Activated T-helper 2 cell treated with anti-CD3 and anti-CD28 coated beads, Interferon-gamma antibody, Interleukin-2, Interleukin-4, amounts not matched to agents 10 μg/mL and 5 μg/mL and 100 μg/mL, durations not matched to agents 14 hours and 24 hours and 36 hours (primary cell): ENCODE measurements at regions of chr4 and their contacts with region 1.

Region 1: GRCh38 chr4:52545099-52546069 is 113.7 kb downstream of the USP46 start:
- DNase-seq: peak; percentile 35
- H3K4me3 Mint-ChIP-seq: no peak overlapping the region
- H3K27ac Mint-ChIP-seq: no peak overlapping the region
- H3K4me1 Mint-ChIP-seq: no peaks in the 10 kb centered on the region
- H3K27me3 Mint-ChIP-seq: no peaks in the 10 kb centered on the region

Region 2: GRCh38 chr4:52376132-52376704 is 169.2 kb before region 1 on chr4:
- intact Hi-C with region 1: no loop called
- DNase-seq: no peak
- H3K4me3 Mint-ChIP-seq: no peak overlapping the region
- H3K27ac Mint-ChIP-seq: no peak overlapping the region
- H3K4me1 Mint-ChIP-seq: no peaks in the 10 kb centered on the region
- H3K27me3 Mint-ChIP-seq: no peaks in the 10 kb centered on the region

Region 3: GRCh38 chr4:52665592-52665991 is 120.2 kb after region 1 on chr4:
- intact Hi-C with region 1: loop called (anchors 5 kb)
- DNase-seq: no peak
- H3K4me3 Mint-ChIP-seq: no peak overlapping the region
- H3K27ac Mint-ChIP-seq: no peak overlapping the region
- H3K4me1 Mint-ChIP-seq: peaks cover 6% of the 10 kb centered on the region
- H3K27me3 Mint-ChIP-seq: peaks cover 24% of the 10 kb centered on the region

Region 4: GRCh38 chr4:52799813-52800212 is 254.4 kb after region 1 on chr4:
- intact Hi-C with region 1: no loop called
- DNase-seq: no peak
- H3K4me3 Mint-ChIP-seq: no peak overlapping the region
- H3K27ac Mint-ChIP-seq: no peak overlapping the region
- H3K4me1 Mint-ChIP-seq: no peaks in the 10 kb centered on the region
- H3K27me3 Mint-ChIP-seq: peaks cover 6% of the 10 kb centered on the region

Region 5: GRCh38 chr4:53012738-53013137 is 467.4 kb after region 1 on chr4:
- intact Hi-C with region 1: no loop called
- DNase-seq: no peak
- H3K4me3 Mint-ChIP-seq: peak overlapping the region; percentile 65
- H3K27ac Mint-ChIP-seq: peak overlapping the region; percentile 78
- H3K4me1 Mint-ChIP-seq: peaks cover 32% of the 10 kb centered on the region
- H3K27me3 Mint-ChIP-seq: no peaks in the 10 kb centered on the region